Left lung (tissue), 14 donors: ENCODE measurements at regions of chr20 and their contacts with region 1.

Region 1: DNA sequence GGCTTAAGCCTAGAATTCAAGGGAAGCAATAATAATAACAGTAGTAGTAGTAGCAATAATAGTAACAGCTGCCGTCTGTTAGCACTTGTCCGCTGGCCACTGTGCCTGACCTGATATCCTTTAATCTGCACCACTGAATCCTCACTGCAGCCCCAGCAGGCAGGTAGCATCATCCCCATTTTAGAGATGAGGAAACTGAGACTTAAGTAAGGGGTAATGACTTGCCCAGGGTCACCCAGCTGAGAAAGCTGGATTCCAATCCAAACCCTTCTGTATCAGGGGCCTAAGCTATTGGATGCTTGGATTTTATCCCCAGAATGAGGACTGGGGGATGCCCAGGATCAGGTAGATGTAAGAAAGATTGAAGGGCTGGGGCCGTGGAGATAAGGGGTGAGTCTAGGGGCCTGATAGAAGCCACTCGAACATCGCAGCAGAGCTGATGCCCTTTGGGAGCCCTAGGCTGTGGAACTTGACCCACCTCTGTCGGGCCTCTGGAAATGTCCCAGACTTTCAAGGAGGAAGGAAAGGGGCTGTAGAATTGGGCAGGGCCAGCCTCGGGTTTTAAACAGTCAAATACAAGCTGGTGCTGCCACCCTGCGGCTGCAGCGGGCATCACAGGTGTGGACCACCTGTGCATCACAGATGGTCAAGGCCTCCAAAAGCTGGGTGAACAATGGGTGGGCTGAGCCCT is 102.1 kb upstream of the MYL9 start:
- DNase-seq: peak in 3 of 4 donors; percentile 57 to 89 (median 60)
- ATAC-seq: peak; percentile 79
- H3K4me3 ChIP-seq: no peak overlapping the region
- H3K27ac ChIP-seq: no peak overlapping the region
- H3K4me1 ChIP-seq: peaks cover 3 to 10% of the 10 kb centered on the region in 2 donors
- H3K27me3 ChIP-seq: peaks cover 0 to 19% of the 10 kb centered on the region in 2 donors
- CTCF ChIP-seq: peak; percentile 79 to 92

Region 2: DNA sequence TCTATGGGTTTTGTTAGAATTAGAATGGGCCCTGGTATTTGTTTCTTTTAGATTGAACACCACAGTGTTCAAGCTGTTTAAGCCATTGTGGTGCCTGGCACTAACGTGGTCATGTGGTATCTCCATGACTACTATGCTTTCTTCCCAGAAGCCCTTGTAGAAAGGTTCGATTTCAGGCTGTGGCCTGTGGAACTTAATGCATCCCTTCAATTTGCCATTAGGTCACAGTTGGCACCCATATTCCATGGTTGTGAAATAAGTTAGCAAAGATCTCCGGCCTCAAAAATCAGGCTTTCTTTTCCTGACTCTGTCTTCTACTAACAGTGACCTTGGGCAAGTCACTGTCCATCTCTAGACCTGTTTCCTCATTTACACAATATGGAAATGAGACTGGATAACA is 234.2 kb before region 1 on chr20:
- intact Hi-C with region 1: loop called in 1 of 2 experiments (anchors 5 kb)
- DNase-seq: no peak
- ATAC-seq: no peak
- H3K4me3 ChIP-seq: no peak overlapping the region
- H3K27ac ChIP-seq: no peak overlapping the region
- H3K4me1 ChIP-seq: no peaks in the 10 kb centered on the region
- H3K27me3 ChIP-seq: no peaks in the 10 kb centered on the region
- CTCF ChIP-seq: no peak